Aorta (tissue), 5 donors: ENCODE measurements at regions of chr2 and their contacts with region 1.

Region 1: GRCh38 chr2:74147727-74148456 is at the start of gene BOLA3:
- DNase-seq: peak; percentile 91 to 96
- ATAC-seq: peak; percentile 96
- H3K4me3 ChIP-seq: peak within 1 kb of the TSS; percentile 51 to 64
- H3K27ac ChIP-seq: peak within 1 kb of the TSS in 1 of 2 donors; percentile 48
- H3K4me1 ChIP-seq: no peaks in the 10 kb centered on the region
- H3K27me3 ChIP-seq: no peaks in the 10 kb centered on the region
- total RNA-seq, gene BOLA3: 13.6 to 15.3 TPM

Region 2: GRCh38 chr2:73828818-73829570 is 318.9 kb before region 1 on chr2 and contains the start of gene STAMBP:
- intact Hi-C with region 1: loop called in 1 of 2 experiments (anchors 10 kb)
- DNase-seq: peak; percentile 98 to 99
- ATAC-seq: peak; percentile 98
- H3K4me3 ChIP-seq: peak within 1 kb of the TSS; percentile 62
- H3K27ac ChIP-seq: peak within 1 kb of the TSS; percentile 64 to 96
- H3K4me1 ChIP-seq: peaks cover 2 to 3% of the 10 kb centered on the region in 2 donors
- H3K27me3 ChIP-seq: no peaks in the 10 kb centered on the region
- total RNA-seq, gene STAMBP: 32.4 to 33.2 TPM

Region 3: GRCh38 chr2:74168739-74169138 is 20.8 kb after region 1 on chr2:
- intact Hi-C with region 1: no loop called
- DNase-seq: no peak
- ATAC-seq: no peak
- H3K4me3 ChIP-seq: no peak overlapping the region
- H3K27ac ChIP-seq: no peak overlapping the region
- H3K4me1 ChIP-seq: no peaks in the 10 kb centered on the region
- H3K27me3 ChIP-seq: no peaks in the 10 kb centered on the region

Region 4: DNA sequence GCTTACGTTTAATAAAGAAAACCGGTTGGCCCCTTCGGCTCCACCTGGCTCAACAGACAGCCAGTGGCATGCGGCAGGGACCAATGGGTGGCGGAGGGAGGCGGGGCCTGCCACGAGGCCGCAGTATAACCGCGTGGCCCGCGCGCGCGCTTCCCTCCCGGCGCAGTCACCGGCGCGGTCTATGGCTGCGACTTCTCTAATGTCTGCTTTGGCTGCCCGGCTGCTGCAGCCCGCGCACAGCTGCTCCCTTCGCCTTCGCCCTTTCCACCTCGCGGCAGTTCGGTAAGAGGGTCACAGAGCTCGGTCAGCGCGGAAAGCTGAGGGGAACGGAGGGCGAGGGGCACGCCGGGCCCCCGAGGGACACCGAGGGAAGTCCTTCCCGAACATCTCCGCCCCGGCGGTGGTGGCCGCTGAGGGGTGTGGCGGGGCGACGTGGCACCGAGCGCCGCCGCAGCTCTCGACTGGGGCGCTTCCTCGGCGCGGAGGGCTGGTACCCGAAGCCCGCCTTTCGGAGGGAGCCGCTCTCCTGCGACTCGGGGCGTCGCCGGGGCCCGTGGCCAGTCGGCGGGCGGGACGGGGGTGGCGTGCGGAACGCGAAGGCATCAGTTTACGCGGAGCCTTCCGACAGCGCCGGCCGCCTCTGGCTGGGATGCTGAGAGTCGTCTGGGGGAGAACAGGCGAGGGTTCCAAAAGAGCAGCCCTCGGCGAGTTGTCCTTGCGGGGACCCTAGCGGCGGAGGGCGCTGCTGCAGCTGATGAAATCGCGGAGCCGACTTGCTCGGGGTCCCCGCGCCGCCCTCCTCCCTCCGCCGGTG is 50.8 kb after region 1 on chr2 and contains the start of gene MTHFD2:
- intact Hi-C with region 1: loop called in 1 of 2 experiments (anchors 5 kb)
- DNase-seq: peak; percentile 96 to 97
- ATAC-seq: peak; percentile 94
- H3K4me3 ChIP-seq: peak within 1 kb of the TSS; percentile 54 to 70
- H3K27ac ChIP-seq: peak within 1 kb of the TSS; percentile 45 to 92
- H3K4me1 ChIP-seq: no peaks in the 10 kb centered on the region
- H3K27me3 ChIP-seq: no peaks in the 10 kb centered on the region
- total RNA-seq, gene MTHFD2: 55.7 to 119 TPM

Region 5: GRCh38 chr2:74261204-74261864 is 113.4 kb after region 1 on chr2:
- intact Hi-C with region 1: loop called (anchors 5 to 10 kb)
- DNase-seq: peak in 1 of 2 donors; percentile 59
- ATAC-seq: no peak
- H3K4me3 ChIP-seq: no peak overlapping the region
- H3K27ac ChIP-seq: no peak overlapping the region
- H3K4me1 ChIP-seq: no peaks in the 10 kb centered on the region
- H3K27me3 ChIP-seq: no peaks in the 10 kb centered on the region